A673 (cell line): ENCODE measurements at regions of chr17 and their contacts with region 1.

Region 1: GRCh38 chr17:12256380-12256995 is 235.8 kb downstream of the MAP2K4 start:
- DNase-seq: peak; percentile 64
- H3K4me3 ChIP-seq: no peak overlapping the region
- H3K27ac ChIP-seq: no peak overlapping the region
- H3K4me1 ChIP-seq: no peaks in the 10 kb centered on the region
- H3K27me3 ChIP-seq: peaks cover 17% of the 10 kb centered on the region
- CTCF ChIP-seq: peak; percentile 84

Region 2: DNA sequence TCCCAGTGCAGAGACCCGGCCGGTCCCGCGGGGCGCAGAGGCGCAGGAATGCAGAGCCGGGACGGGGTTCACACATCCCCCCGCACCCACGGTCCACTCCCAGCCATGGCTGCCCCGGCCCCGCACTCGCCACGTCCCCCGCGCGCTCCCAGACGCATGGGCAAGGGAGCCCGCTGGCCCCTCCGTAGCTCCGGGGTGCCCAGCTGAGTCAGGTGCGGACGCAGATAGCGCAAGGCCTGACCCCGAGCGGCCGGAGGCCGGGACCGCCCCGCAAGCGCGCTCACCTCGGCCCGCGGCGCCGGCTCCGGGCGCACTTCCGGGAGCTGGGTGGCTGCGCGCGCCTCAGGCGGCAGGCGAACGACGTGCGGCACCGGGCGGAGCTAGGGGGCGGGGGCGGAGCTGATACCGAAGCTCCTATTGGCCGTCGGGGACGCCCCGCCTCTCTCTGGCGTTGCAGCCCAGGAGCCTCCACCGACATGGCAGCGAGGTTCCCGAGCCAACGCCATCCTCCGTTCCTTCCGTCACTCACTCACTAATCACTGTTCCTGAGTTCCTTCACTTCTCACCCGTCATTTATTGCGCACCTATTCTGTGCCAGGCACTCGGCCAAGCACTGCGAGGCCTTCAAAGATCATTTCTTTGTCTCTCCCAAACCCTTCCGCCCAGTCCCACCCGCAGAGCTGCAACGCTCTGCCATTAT is 259.2 kb before region 1 on chr17 and contains the start of gene ZNF18:
- CTCF ChIA-PET with region 1: no interaction called
- POLR2A ChIA-PET with region 1: no interaction called
- intact Hi-C with region 1: no loop called
- DNase-seq: peak; percentile 96
- H3K4me3 ChIP-seq: peak within 1 kb of the TSS; percentile 84
- H3K27ac ChIP-seq: peak within 1 kb of the TSS; percentile 86
- H3K4me1 ChIP-seq: peaks cover 5% of the 10 kb centered on the region
- H3K27me3 ChIP-seq: no peaks in the 10 kb centered on the region
- CTCF ChIP-seq: no peak
- total RNA-seq, gene ZNF18: 10.9 and 11.9 TPM in 2 replicates

Region 3: GRCh38 chr17:12320286-12320685 is 63.8 kb after region 1 on chr17:
- CTCF ChIA-PET with region 1: no interaction called
- POLR2A ChIA-PET with region 1: no interaction called
- intact Hi-C with region 1: loop called (anchors 10 kb)
- DNase-seq: peak; percentile 2
- H3K4me3 ChIP-seq: no peak overlapping the region
- H3K27ac ChIP-seq: no peak overlapping the region
- H3K4me1 ChIP-seq: no peaks in the 10 kb centered on the region
- H3K27me3 ChIP-seq: peaks cover 11% of the 10 kb centered on the region
- CTCF ChIP-seq: no peak

Region 4: GRCh38 chr17:12667299-12667958 is 410.9 kb after region 1 on chr17:
- CTCF ChIA-PET with region 1: no interaction called
- POLR2A ChIA-PET with region 1: no interaction called
- intact Hi-C with region 1: loop called (anchors 1 kb)
- DNase-seq: peak; percentile 58
- H3K4me3 ChIP-seq: no peak overlapping the region
- H3K27ac ChIP-seq: no peak overlapping the region
- H3K4me1 ChIP-seq: no peaks in the 10 kb centered on the region
- H3K27me3 ChIP-seq: peaks cover 69% of the 10 kb centered on the region
- CTCF ChIP-seq: peak; percentile 54

Region 5: GRCh38 chr17:12744298-12744697 is 487.8 kb after region 1 on chr17:
- CTCF ChIA-PET with region 1: no interaction called
- POLR2A ChIA-PET with region 1: no interaction called
- intact Hi-C with region 1: loop called (anchors 5 kb)
- DNase-seq: no peak
- H3K4me3 ChIP-seq: no peak overlapping the region
- H3K27ac ChIP-seq: no peak overlapping the region
- H3K4me1 ChIP-seq: no peaks in the 10 kb centered on the region
- H3K27me3 ChIP-seq: no peaks in the 10 kb centered on the region
- CTCF ChIP-seq: no peak